ENCODE measurements at regions of chr13 and their contacts with region 1.

Region 1: GRCh38 chr13:59176775-59177174 is 987.0 kb downstream of the DIAPH3 start:
- DNase-seq: peak in 1 of 2 experiments; percentile 12
- H3K4me3 ChIP-seq: no peak overlapping the region
- H3K4me3 Mint-ChIP-seq: no peak overlapping the region
- H3K27ac Mint-ChIP-seq: no peak overlapping the region
- H3K4me1 ChIP-seq: no peaks in the 10 kb centered on the region
- H3K4me1 Mint-ChIP-seq: no peaks in the 10 kb centered on the region
- H3K27me3 ChIP-seq: no peaks in the 10 kb centered on the region
- H3K27me3 Mint-ChIP-seq: no peaks in the 10 kb centered on the region
- CTCF ChIP-seq: peak; percentile 42 to 54

Region 2: DNA sequence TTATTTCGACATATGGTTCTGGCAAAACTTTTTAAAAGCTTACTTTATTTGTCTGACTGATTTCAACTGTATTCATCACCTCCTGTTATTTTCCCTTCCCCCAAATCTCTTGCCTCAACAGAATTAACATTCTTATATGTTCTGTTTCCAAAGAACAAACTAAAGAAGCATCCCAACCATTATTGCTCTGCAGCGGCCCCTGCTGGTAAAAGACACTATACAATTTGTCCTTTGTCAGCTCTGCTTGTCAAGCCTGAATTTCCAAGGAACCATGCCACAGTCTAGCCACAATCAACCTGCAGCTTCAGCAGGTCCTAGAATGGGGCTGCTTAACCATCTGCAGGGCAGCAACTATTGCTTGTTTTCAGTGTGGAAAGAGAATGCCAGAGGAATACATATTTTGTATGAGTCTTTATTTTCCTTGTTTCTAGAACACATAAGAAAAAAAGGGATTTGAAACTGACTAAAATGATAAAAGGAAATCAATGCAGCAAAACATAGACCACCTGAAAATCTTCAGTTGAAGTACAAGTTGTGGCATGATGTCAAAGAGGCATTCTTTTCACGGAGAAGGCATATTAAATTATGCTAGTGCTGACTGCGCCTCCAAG is 141.7 kb after region 1 on chr13:
- CTCF ChIA-PET with region 1: no interaction called
- POLR2A ChIA-PET with region 1: no interaction called
- intact Hi-C with region 1: loop called (anchors 2 kb)
- DNase-seq: peak; percentile 71 to 82
- H3K4me3 ChIP-seq: no peak overlapping the region
- H3K4me3 Mint-ChIP-seq: no peak overlapping the region
- H3K27ac Mint-ChIP-seq: no peak overlapping the region
- H3K4me1 ChIP-seq: peaks cover 6% of the 10 kb centered on the region; the same call in 1 of the 2 replicates
- H3K4me1 Mint-ChIP-seq: peaks cover 9% of the 10 kb centered on the region
- H3K27me3 ChIP-seq: no peaks in the 10 kb centered on the region
- H3K27me3 Mint-ChIP-seq: no peaks in the 10 kb centered on the region
- CTCF ChIP-seq: peak; percentile 77 to 90

Region 3: GRCh38 chr13:59633290-59633689 is 456.5 kb after region 1 on chr13:
- CTCF ChIA-PET with region 1: no interaction called
- POLR2A ChIA-PET with region 1: no interaction called
- intact Hi-C with region 1: no loop called
- DNase-seq: no peak
- H3K4me3 ChIP-seq: no peak overlapping the region
- H3K4me3 Mint-ChIP-seq: no peak overlapping the region
- H3K27ac Mint-ChIP-seq: no peak overlapping the region
- H3K4me1 ChIP-seq: no peaks in the 10 kb centered on the region
- H3K4me1 Mint-ChIP-seq: no peaks in the 10 kb centered on the region
- H3K27me3 ChIP-seq: no peaks in the 10 kb centered on the region; the same call in 1 of the 2 replicates
- H3K27me3 Mint-ChIP-seq: no peaks in the 10 kb centered on the region
- CTCF ChIP-seq: no peak

Measured in Caco-2 (cell line).